Activated CD4-positive, alpha-beta memory T cell treated with anti-CD3 and anti-CD28 coated beads for 36 hours (primary cell): ENCODE measurements at regions of chr10 and their contacts with region 1.

Region 1: DNA sequence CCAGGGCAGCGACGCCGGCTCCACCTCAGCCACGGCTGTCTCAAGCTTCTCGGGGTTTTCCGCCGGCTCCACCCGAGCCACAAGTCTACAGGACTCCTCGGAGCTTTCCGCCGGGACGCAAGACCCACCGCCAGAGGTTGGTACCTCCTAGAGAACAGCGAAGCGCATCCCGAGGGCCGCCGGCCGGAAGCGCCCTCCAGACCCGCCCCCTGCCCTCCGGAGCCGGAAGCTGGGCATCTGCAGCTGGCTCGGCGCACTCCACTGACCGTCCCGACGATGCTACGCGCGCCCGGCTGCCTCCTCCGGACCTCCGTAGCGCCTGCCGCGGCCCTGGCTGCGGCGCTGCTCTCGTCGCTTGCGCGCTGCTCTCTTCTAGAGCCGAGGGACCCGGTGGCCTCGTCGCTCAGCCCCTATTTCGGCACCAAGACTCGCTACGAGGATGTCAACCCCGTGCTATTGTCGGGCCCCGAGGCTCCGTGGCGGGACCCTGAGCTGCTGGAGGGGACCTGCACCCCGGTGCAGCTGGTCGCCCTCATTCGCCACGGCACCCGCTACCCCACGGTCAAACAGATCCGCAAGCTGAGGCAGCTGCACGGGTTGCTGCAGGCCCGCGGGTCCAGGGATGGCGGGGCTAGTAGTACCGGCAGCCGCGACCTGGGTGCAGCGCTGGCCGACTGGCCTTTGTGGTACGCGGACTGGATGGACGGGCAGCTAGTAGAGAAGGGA is at the start of gene MINPP1:
- DNase-seq: peak; percentile 93
- H3K4me3 Mint-ChIP-seq: peak within 1 kb of the TSS; percentile 88
- H3K27ac Mint-ChIP-seq: peak within 1 kb of the TSS; percentile 80
- H3K4me1 Mint-ChIP-seq: peaks cover 35% of the 10 kb centered on the region
- H3K27me3 Mint-ChIP-seq: peaks cover 4% of the 10 kb centered on the region
- total RNA-seq, gene MINPP1: 8.7 to 9.7 TPM

Region 2: DNA sequence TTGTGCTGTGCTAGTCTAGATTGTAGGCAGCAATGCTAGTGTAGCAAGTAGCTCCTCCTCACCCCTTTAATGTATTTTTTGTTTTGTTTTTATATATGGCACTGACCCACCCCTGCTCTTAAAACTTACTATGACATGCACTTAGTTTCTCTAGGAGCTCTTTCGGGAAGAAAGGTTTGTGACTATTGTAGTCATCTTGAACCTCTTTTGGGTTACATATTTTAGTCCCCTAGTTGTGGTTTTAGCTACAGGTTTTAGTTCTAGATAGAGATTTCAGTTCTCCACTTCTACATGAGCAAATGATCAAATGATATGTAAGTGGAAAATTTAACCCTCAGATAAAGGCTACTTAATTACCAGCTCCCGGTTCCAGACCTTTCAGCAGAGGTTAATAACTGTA is 14.8 kb after region 1 on chr10:
- CTCF ChIA-PET with region 1: interaction called, 16 read pairs
- POLR2A ChIA-PET with region 1: interaction called, 15 read pairs
- intact Hi-C with region 1: no loop called
- DNase-seq: no peak
- H3K4me3 Mint-ChIP-seq: no peak overlapping the region
- H3K27ac Mint-ChIP-seq: no peak overlapping the region
- H3K4me1 Mint-ChIP-seq: peaks cover 10% of the 10 kb centered on the region
- H3K27me3 Mint-ChIP-seq: no peaks in the 10 kb centered on the region

Region 3: GRCh38 chr10:87761892-87762291 is 257.1 kb after region 1 on chr10:
- CTCF ChIA-PET with region 1: no interaction called
- POLR2A ChIA-PET with region 1: no interaction called
- intact Hi-C with region 1: loop called (anchors 1 kb)
- DNase-seq: peak; percentile 75
- H3K4me3 Mint-ChIP-seq: no peak overlapping the region
- H3K27ac Mint-ChIP-seq: peak overlapping the region; percentile 72
- H3K4me1 Mint-ChIP-seq: peaks cover 31% of the 10 kb centered on the region
- H3K27me3 Mint-ChIP-seq: no peaks in the 10 kb centered on the region